ENCODE measurements at regions of chr16 and their contacts with region 1.

Region 1: DNA sequence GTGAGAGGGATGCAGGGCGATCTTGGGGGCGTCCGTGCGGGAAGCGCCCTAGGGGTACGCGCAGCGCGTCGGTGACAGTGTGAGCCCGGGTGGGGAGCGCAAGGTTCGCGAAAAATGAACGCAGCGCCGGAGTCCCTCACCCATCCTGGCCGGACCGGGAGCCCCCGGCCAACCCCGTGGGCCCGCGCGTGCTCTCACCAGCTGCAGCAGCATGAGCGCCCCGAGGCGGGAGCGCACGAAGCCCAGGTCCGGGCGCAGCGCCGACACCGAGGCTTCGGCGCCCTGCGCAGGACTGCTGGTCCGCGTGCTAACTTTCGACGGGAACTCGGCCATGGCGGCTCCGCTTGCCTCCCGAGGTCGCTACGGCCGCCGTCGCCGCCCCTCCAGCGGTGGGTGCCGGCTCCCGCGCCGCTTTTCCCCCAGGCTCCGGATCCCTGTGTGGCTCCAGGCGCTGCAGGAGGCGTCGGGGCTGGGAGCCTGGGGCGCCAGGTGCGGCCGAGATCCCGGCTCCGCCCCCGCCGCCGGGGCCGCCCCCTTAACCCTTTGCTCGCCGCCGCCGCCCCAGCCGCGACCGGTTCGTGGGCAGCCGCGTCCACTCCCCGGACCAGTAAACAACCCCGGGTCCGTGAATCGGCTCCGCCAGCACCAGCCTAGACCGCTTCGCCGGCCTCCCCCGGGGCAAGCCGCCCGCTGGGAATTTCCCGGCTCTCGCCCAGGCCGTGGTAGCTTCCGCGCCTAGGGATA is at the start of gene PLLP:
- DNase-seq: peak in 7 of 10 donors; percentile 17 to 81 (median 60)
- H3K4me3 ChIP-seq: peak within 1 kb of the TSS; percentile 42 to 93 (median 75)
- H3K27ac ChIP-seq: peak within 1 kb of the TSS; percentile 58 to 99 (median 95)
- H3K27me3 ChIP-seq: peaks cover 0 to 17% (median 3%) of the 10 kb centered on the region in 45 donors
- CTCF ChIP-seq: peak in 12 of 56 donors; percentile 7 to 29 (median 14)
- total RNA-seq, gene PLLP: 20.8 to 459 (median 91.3) TPM

Region 2: DNA sequence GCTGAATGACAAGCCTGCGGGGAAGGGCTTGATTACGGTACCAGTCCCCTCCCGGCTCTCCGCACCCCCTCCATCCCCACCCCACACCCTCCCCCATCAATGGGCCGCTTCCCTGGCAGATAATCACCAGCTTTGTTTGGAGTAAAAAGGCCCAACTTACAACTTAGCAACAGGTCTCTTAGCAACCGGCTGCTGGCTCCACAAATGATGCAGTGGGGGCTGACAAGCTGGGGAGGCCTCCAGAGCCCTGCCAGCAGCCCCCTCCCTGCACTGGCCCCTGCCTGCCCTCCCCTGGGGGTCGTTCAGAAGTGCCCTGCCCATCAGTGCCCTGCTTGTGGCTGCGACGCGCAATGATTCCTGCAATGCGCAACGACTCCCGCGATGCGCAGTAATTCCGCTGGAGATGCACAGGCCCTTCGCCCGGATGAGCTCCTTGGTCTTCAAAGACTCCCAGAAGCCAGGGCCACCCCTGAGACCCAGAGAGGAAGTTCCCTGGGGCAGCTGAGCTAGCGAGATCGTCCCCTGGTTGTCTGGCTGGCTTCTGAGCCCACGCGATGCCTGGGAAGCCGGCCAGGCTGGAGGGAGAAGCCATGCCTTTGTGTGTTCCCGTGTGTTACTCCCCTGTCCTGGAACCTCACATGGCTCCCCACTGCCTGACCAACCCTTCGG is 168.7 kb before region 1 on chr16:
- intact Hi-C with region 1: no loop called
- DNase-seq: peak; percentile 53 to 90 (median 86)
- H3K4me3 ChIP-seq: peak overlapping the region in 55 of 59 donors; percentile 12 to 58 (median 37)
- H3K27ac ChIP-seq: peak overlapping the region; percentile 88 to 100 (median 98)
- H3K27me3 ChIP-seq: no peaks in the 10 kb centered on the region
- CTCF ChIP-seq: peak in 10 of 56 donors; percentile 7 to 36 (median 12)

Region 3: GRCh38 chr16:57262841-57263540 is 21.4 kb before region 1 on chr16:
- intact Hi-C with region 1: loop called in 1 of 2 experiments (anchors 2 kb)
- DNase-seq: peak in 8 of 10 donors; percentile 58 to 76 (median 72)
- H3K4me3 ChIP-seq: peak overlapping the region in 1 of 59 donors; percentile 2
- H3K27ac ChIP-seq: peak overlapping the region; percentile 49 to 99 (median 95)
- H3K27me3 ChIP-seq: no peaks in the 10 kb centered on the region
- CTCF ChIP-seq: no peak

Measured in dorsolateral prefrontal cortex (tissue), 120 donors.